ENCODE measurements at regions of chr15 and their contacts with region 1.

Region 1: DNA sequence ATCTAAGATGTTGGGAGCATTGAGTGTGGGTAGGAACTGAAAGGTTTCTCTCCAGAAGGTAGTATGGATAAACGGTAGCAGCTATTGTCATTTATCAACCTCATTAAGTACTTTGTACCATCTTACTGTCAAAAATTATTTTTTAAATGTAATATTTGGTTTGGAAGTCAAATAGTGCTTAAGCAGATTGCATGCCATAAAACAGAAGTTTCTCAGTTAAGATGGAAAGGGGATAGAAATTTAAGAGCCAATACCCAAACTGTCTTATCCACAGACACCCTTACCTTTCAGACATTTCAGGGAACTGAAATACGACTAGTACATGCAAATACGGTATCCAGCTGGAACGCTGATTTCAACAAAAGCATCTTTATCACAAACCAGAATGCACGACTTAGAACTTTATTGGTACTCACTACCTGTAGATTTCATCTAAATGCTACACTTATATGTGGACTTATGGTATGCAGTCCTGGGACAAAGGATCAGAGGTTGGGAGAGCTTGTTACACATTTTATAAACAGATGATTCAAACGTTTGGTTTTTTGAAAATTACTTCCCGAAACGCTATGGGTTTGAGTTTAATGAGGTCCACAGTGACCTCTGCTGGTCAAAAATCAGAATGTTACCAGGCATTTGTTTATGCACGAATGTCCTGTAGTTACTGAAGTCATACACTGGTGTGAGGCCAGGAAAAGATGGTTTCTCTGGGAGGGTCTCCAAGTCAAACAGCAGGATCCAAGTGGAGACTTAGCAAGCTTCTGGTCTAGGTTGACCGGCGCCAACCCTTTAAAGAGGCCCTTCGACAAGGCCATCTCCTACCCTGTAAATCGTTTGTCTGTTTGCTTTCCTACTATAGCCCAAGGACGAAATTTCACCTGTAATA is 45.7 kb upstream of the DUT start:
- DNase-seq: peak; percentile 49 to 72 (median 56)
- ATAC-seq: peak; percentile 91
- H3K4me3 ChIP-seq: no peak overlapping the region
- H3K27ac ChIP-seq: no peak overlapping the region
- H3K4me1 ChIP-seq: no peaks in the 10 kb centered on the region
- H3K27me3 ChIP-seq: no peaks in the 10 kb centered on the region
- CTCF ChIP-seq: peak; percentile 43 to 72 (median 64); a peak in 5 of 6 replicates
- EP300 ChIP-seq: no peak
- POLR2A ChIP-seq: no peak
- RAD21 ChIP-seq: peak; percentile 43 to 59; a peak in 3 of 4 replicates

Region 2: DNA sequence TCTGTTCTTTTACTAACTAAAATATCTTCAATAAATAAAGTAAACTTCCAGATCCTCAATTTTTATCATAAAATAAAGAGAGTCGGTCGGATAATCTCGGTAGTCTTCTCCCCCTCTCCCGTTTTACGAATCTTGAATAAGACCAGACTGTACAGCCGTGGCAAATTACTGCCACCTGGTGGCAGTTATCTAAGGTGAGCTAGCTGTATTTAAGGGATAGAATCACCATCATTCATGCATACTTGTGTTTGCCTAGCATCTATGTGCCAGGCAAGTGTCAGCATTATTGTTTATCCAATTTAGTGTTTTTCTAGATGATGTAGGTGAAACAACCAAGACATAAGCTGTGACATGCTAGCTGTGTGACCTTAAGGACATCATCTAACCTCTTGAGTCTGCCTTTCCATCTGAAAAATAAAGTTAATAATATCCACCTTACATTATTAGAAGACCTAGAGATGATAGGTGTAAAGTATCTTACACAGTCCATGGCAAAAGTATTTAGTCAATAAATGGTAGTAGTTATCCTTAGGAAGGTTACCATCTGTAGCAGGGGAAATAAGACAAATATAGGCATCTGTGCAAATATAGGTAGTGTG is 67.0 kb after region 1 on chr15:
- CTCF ChIA-PET with region 1: interaction called, 3 read pairs
- POLR2A ChIA-PET with region 1: no interaction called
- in situ Hi-C with region 1: no loop called
- intact Hi-C with region 1: loop called (anchors 5 kb)
- DNase-seq: peak; percentile 56 to 83 (median 62)
- ATAC-seq: peak; percentile 96
- H3K4me3 ChIP-seq: no peak overlapping the region
- H3K27ac ChIP-seq: no peak overlapping the region
- H3K4me1 ChIP-seq: no peaks in the 10 kb centered on the region; a peak in 2 of 5 replicates
- H3K27me3 ChIP-seq: no peaks in the 10 kb centered on the region
- CTCF ChIP-seq: peak; percentile 72 to 84 (median 79)
- EP300 ChIP-seq: no peak
- POLR2A ChIP-seq: no peak
- RAD21 ChIP-seq: peak; percentile 69 to 85

Measured in K562 (cell line).